HepG2 (cell line): ENCODE measurements at regions of chr20 and their contacts with region 1.

Region 1: DNA sequence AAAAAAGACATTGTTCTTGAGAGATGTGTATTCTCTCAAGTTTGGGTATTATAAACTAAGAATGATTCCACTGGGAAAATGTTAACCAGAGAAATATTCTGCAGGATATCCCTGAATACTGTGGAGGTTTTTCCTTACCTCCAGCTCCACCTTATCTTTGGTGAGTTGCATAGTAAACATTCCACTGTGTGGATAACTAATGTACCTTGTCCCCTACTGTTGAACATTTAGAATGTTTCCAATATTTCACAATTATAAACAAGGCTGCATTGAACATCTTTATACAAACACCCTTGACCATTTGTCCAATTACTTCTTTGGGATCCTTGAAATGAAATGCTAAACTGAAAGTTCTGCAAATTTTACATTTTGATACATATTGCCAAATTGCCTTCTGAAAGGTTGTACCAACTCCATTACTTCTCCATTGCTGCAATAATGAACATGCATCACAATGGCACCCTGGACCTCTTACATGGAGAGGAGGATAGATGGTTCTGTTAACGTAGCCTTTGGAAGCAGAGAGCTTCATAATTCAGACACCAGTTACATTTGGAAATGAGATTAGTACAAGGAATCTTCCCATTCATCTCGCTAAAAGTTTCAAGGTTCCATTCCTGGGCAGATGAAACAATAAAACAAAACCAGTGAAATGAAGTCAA is 35.0 kb upstream of the STK35 start:
- DNase-seq: peak; percentile 93
- ATAC-seq: peak; percentile 100
- H3K4me3 ChIP-seq: peak overlapping the region in 2 of 3 experiments; percentile 8 to 39; a peak in 1 of 6 replicates
- H3K27ac ChIP-seq: peak overlapping the region; percentile 61
- H3K4me1 ChIP-seq: peaks cover 41% of the 10 kb centered on the region
- H3K27me3 ChIP-seq: no peaks in the 10 kb centered on the region
- CTCF ChIP-seq: no peak
- EP300 ChIP-seq: peak; percentile 91 to 94
- POLR2A ChIP-seq: no peak
- RAD21 ChIP-seq: peak; percentile 36; the same call in 1 of the 2 replicates

Region 2: GRCh38 chr20:1881240-1881835 is 185.3 kb before region 1 on chr20:
- CTCF ChIA-PET with region 1: no interaction called
- POLR2A ChIA-PET with region 1: no interaction called
- in situ Hi-C with region 1: no loop called
- intact Hi-C with region 1: no loop called
- DNase-seq: no peak
- ATAC-seq: peak; percentile 23
- H3K4me3 ChIP-seq: no peak overlapping the region
- H3K27ac ChIP-seq: no peak overlapping the region
- H3K4me1 ChIP-seq: peaks cover 64% of the 10 kb centered on the region
- H3K27me3 ChIP-seq: peaks cover 2 to 5% of the 10 kb centered on the region in 2 experiments; a peak in 3 of 5 replicates
- CTCF ChIP-seq: no peak
- EP300 ChIP-seq: peak in 1 of 2 experiments; percentile 49; a peak in 1 of 4 replicates
- POLR2A ChIP-seq: no peak
- RAD21 ChIP-seq: no peak

Region 3: DNA sequence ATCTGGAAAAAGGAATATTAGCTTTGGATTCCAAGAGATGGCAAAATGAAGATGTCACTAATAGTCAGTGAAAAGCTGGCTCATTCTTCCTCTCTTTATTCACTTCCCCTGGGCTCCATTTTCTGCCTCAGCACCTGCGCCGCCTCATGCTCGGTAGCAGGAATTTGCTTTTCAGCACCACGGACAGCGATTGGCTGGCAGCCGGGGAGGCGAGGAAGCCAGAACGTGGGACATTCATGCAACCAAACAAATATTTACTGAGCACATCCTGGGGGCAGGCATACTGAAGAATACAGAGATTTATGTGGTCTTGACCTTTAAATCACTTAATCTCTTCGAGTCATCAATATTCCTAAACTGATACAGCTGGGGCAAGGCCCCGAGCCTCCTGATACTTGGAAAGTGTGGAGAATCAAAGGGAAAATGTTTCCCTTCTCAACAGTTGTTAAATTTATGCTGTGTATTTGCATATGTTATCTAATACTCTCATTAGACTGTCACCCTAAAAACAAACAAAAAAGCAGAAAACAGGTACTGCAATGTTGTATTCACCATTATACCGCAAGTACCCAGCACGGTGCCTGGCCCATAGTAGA is 60.7 kb before region 1 on chr20:
- CTCF ChIA-PET with region 1: no interaction called
- POLR2A ChIA-PET with region 1: no interaction called
- in situ Hi-C with region 1: no loop called
- intact Hi-C with region 1: loop called (anchors 1 kb)
- DNase-seq: peak; percentile 78
- ATAC-seq: peak; percentile 89
- H3K4me3 ChIP-seq: no peak overlapping the region
- H3K27ac ChIP-seq: no peak overlapping the region
- H3K4me1 ChIP-seq: peaks cover 9% of the 10 kb centered on the region
- H3K27me3 ChIP-seq: no peaks in the 10 kb centered on the region
- CTCF ChIP-seq: peak; percentile 48
- EP300 ChIP-seq: no peak; a peak in 1 of 4 replicates
- POLR2A ChIP-seq: no peak
- RAD21 ChIP-seq: no peak

Region 4: DNA sequence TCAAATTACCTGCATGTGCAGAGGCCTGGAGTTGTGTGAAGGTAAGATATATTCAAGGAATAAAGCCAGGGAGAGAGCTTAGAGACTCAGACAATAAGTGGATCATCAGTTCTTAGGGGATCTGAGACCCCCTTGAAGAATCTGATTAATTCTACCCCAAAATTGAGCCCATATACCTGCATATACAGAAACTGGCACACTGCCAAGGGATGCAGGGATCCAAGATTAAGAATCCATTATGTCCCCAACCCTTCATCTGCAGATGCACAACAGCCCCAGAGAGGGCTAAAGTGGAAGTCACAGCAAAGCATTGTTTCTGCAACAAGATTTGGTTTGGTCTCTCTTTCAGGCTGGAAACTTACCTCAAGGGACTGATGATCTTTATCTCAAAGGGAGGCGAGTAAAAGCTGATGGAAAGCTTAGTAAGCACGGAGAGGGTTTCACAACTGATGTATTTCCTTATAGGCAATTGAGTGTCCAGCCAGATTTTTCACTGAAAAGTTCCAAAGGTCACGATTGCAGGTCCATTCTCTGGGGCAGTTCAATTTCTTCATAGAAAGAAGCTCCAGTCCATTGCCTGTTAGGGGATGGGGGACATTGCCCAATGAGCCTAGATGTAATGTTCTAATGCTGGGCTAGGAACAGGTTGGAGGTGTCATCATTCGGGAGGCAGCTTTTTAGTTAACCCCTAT is 14.1 kb after region 1 on chr20:
- CTCF ChIA-PET with region 1: no interaction called
- POLR2A ChIA-PET with region 1: interaction called, 3 read pairs
- in situ Hi-C with region 1: no loop called
- intact Hi-C with region 1: loop called (anchors 1 kb)
- DNase-seq: peak; percentile 69
- ATAC-seq: peak; percentile 78
- H3K4me3 ChIP-seq: no peak overlapping the region
- H3K27ac ChIP-seq: no peak overlapping the region
- H3K4me1 ChIP-seq: peaks cover 16% of the 10 kb centered on the region
- H3K27me3 ChIP-seq: peaks cover 0 to 1% of the 10 kb centered on the region in 2 experiments; a peak in 1 of 5 replicates
- CTCF ChIP-seq: no peak
- EP300 ChIP-seq: no peak
- POLR2A ChIP-seq: no peak
- RAD21 ChIP-seq: no peak

Region 5: DNA sequence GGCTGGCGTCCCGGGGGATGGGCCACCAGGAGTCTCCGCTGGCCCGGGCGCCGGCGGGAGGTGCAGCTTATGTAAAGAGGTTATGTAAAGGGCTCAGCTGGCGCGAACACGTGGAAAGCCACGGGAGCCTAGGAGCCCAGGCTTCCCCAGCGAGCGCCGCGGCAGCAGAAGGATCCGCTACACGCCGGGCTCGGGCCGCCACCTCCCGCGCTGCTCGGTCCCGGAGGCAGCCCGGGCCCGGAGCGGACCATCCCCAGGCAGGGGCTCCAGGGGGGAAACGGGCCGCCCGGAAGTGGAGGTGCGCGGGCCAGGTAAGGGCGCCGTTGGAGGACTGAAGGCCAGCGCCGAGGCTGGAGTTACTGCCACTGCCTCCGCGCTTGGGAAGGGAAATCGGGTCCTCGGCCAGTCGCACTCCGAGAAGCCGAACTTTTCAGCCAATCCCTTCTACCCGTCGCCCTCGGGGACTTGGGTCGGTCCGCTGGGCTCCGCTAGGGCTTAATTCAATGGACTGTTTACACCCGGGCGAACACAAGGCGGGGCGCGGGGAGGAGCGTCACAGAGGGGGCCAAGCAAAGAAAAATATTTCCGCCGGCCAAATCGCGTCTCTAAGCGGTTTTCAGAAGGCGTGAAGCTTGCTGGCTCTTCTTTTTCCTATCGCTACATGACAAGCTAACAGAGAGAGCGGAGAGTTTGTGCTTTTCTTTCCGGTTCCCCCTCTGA is 35.4 kb after region 1 on chr20:
- CTCF ChIA-PET with region 1: no interaction called
- POLR2A ChIA-PET with region 1: interaction called, 7 read pairs
- in situ Hi-C with region 1: no loop called
- intact Hi-C with region 1: loop called (anchors 2 kb)
- DNase-seq: peak; percentile 94
- ATAC-seq: peak; percentile 88
- H3K4me3 ChIP-seq: peak overlapping the region; percentile 71 to 96 (median 74)
- H3K27ac ChIP-seq: peak overlapping the region; percentile 100
- H3K4me1 ChIP-seq: peaks cover 50% of the 10 kb centered on the region
- H3K27me3 ChIP-seq: no peaks in the 10 kb centered on the region; a peak in 1 of 5 replicates
- CTCF ChIP-seq: peak; percentile 32
- EP300 ChIP-seq: 0 out of 4 replicates have a peak, but pooled peaks have one; percentile 3 to 6
- POLR2A ChIP-seq: peak; percentile 91 to 95
- RAD21 ChIP-seq: peak; percentile 60